ENCODE measurements at regions of chr10 and their contacts with region 1.

Region 1: DNA sequence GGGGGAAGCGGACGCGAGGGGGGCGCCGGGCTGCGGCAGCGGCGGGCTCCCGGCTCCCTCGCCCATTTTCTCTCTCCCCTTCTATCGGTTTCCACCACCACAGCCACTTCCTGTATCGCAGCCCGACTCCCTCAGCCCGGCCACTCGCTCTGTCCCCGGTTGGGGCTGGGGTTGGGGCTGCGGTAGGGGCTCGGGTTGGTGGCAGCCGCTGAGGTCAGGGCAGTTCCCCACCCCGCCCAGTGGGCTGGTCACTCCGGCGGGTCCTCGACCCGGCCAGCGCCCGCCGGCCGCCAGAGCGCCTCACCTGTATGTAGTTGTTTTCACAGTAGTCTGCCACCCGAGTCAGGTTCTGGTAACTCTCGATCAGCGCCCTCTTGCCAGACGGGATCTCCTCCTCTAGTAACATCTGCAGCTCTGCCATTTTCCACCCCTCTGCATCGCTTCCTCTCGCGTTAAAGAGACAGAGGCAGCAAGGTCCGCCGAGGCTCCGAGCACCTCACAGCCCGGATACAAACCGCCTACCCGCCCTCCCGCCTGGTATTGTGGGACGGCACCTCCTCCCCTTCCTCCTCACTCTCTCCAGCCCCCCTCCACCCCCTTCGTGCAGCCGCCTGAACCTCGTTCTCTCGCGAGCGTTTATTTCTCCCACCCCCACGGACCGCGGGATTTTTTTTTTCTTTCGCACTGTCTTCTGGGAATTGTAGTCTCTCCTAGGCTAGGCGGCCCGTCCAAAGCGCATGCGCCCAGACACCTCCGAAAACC is at the start of gene ABI1:
- DNase-seq: peak; percentile 99
- H3K4me3 ChIP-seq: peak within 1 kb of the TSS; percentile 71 to 96 (median 79)
- H3K27ac ChIP-seq: peak within 1 kb of the TSS; percentile 91 to 98 (median 94)
- H3K4me1 ChIP-seq: peaks cover 0 to 36% (median 31%) of the 10 kb centered on the region in 4 donors
- H3K27me3 ChIP-seq: no peaks in the 10 kb centered on the region
- CTCF ChIP-seq: no peak
- EP300 ChIP-seq: no peak
- POLR2A ChIP-seq: peak; percentile 98
- total RNA-seq, gene ABI1: 37.3 to 47.8 (median 42.7) TPM

Region 2: GRCh38 chr10:26725837-26726727 is 134.5 kb before region 1 on chr10:
- intact Hi-C with region 1: loop called (anchors 5 kb)
- DNase-seq: peak; percentile 89
- H3K4me3 ChIP-seq: no peak overlapping the region
- H3K27ac ChIP-seq: no peak overlapping the region
- H3K4me1 ChIP-seq: no peaks in the 10 kb centered on the region
- H3K27me3 ChIP-seq: no peaks in the 10 kb centered on the region
- CTCF ChIP-seq: peak; percentile 38 to 78 (median 66)
- EP300 ChIP-seq: no peak
- POLR2A ChIP-seq: no peak

Region 3: DNA sequence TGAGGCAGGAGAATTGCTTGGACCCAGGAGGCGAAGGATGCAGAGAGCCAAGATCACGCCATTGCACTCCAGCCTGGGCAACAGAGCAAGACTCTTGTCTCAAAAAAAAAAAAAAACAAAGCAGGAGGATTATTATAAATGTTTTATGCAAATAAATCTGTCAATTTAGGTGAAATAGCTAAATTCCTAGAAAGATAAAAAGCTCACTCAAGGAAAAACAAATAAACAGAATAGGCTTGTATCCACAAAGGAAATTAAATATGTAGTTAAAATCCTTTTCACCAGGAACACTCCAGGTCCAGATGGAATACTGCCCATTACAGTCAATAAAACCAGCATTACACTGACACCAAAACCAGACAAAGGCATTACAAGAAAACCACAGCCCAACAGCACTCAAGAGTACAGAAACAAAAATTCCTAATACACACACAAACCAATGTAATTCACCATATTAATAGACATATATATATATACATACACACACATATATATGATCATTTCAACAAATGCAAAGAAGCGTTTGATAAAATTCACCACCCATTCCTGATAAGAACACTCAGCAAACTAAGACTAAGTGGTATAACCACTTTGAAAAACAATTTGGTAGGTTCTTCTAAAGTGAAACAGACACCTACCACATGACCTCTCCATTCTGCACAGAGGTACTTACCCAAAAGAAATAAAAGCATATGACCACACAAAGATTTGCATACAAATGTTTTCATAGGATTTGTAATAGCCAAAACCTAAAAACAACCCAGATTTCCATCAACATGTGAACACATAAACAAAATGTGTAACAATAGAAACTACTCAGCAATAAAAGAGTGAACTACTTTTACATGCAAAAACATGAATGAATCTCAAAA is 38.7 kb before region 1 on chr10:
- intact Hi-C with region 1: no loop called
- DNase-seq: no peak
- H3K4me3 ChIP-seq: no peak overlapping the region
- H3K27ac ChIP-seq: no peak overlapping the region
- H3K4me1 ChIP-seq: peaks cover 0 to 36% (median 8%) of the 10 kb centered on the region in 4 donors
- H3K27me3 ChIP-seq: no peaks in the 10 kb centered on the region
- CTCF ChIP-seq: no peak
- EP300 ChIP-seq: no peak
- POLR2A ChIP-seq: no peak

Region 4: GRCh38 chr10:27041196-27041595 is 180.6 kb after region 1 on chr10:
- intact Hi-C with region 1: no loop called
- DNase-seq: no peak
- H3K4me3 ChIP-seq: no peak overlapping the region
- H3K27ac ChIP-seq: no peak overlapping the region
- H3K4me1 ChIP-seq: no peaks in the 10 kb centered on the region
- H3K27me3 ChIP-seq: no peaks in the 10 kb centered on the region
- CTCF ChIP-seq: no peak
- EP300 ChIP-seq: no peak
- POLR2A ChIP-seq: no peak